Prostate gland (tissue), 2 donors: ENCODE measurements at regions of chr9 and their contacts with region 1.

Region 1: DNA sequence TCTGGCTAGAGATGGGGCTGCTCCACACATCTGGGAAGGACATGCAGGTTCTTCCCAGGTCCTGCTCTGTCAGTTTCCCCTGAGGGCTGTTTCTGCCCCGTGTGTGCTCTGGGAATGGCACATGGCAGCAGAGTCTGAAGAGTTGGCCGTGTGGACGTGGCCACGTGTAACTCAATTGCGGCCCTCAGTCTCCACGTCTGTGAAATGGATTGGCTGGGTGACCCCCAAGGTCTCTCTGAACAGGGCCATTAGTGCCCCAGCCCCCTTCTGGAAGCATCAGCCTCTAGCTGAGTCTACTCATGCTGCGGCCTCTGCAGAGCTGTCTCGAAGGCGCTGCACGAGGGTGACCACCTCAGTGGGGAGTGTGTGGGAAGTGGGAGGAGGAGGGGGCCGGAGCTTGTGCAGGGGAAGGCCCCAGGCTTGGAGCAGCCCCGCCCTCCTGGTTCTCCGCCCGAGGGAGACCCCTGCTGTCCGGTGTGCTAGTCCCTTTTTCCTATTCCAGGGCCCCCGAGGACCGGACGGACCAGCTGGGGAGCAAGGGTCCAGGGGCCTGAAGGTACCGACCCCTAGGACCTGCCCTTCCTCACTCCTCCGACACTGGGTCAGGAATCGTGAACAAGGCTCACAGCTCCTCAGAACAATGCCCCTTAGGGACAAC is 58.9 kb upstream of the ORM1 start:
- DNase-seq: no peak
- H3K4me3 ChIP-seq: no peak overlapping the region
- H3K27ac ChIP-seq: no peak overlapping the region
- H3K4me1 ChIP-seq: no peaks in the 10 kb centered on the region
- H3K27me3 ChIP-seq: no peaks in the 10 kb centered on the region
- CTCF ChIP-seq: peak in 3 of 4 experiments; percentile 16 to 43 (median 24)
- POLR2A ChIP-seq: no peak

Region 2: GRCh38 chr9:114108016-114108833 is 155.8 kb before region 1 on chr9:
- intact Hi-C with region 1: loop called (anchors 5 kb)
- DNase-seq: peak; percentile 79
- H3K4me3 ChIP-seq: no peak overlapping the region
- H3K27ac ChIP-seq: no peak overlapping the region
- H3K4me1 ChIP-seq: no peaks in the 10 kb centered on the region
- H3K27me3 ChIP-seq: no peaks in the 10 kb centered on the region
- CTCF ChIP-seq: peak; percentile 84 to 98 (median 95)
- POLR2A ChIP-seq: no peak